CD8-positive, alpha-beta T cell (primary cell): ENCODE measurements at regions of chr16 and their contacts with region 1.

Region 1: GRCh38 chr16:11396241-11397048 is 51.2 kb downstream of the RMI2 start:
- DNase-seq: peak; percentile 46 to 78 (median 65)
- ATAC-seq: peak; percentile 85
- H3K4me3 ChIP-seq: no peak overlapping the region
- H3K4me3 Mint-ChIP-seq: no peak overlapping the region
- H3K27ac ChIP-seq: no peak overlapping the region
- H3K27ac Mint-ChIP-seq: no peak overlapping the region
- H3K4me1 ChIP-seq: no peaks in the 10 kb centered on the region
- H3K4me1 Mint-ChIP-seq: no peaks in the 10 kb centered on the region
- H3K27me3 ChIP-seq: no peaks in the 10 kb centered on the region
- H3K27me3 Mint-ChIP-seq: no peaks in the 10 kb centered on the region
- CTCF ChIP-seq: peak; percentile 99

Region 2: DNA sequence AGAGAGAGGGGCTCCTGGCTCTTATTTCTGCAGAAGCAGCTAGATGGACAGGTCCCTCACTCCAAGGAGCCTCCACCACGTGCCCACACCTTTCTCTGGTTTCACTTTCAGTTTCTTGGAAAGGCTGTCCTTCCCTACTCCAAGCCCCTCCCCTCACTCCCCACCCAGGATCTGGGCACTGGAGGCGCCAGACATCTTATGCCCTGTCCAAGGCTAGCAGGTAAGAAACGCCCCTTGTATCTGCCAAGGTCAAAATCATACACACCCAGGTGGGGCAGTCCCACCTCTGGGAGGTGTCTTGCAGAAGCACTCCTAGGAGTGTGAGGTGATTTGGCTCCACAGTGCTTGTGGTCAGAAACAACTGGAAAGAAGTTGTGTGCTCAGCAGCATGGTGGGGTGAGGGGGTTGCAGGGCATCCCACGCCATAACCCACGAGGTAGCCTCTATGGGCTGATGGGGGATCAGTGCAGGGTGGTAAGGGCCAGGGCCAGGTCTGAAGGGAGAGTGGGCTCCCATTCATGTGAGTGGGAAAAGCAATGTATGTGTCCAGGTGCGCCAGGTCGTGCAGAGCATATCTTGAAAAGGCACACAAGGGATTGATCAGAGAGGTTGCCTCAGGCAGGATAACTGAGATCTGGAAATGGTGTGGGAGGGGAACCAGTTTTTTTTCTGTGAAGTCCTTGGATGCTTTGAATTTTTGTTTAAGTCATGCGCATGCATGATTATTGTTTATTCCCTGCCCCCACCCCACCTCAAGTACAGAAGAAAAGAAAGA is 83.5 kb before region 1 on chr16:
- CTCF ChIA-PET with region 1: no interaction called
- POLR2A ChIA-PET with region 1: no interaction called
- intact Hi-C with region 1: no loop called
- DNase-seq: peak in 3 of 9 experiments; percentile 28 to 58 (median 33)
- ATAC-seq: peak; percentile 16
- H3K4me3 ChIP-seq: no peak overlapping the region
- H3K4me3 Mint-ChIP-seq: peak overlapping the region; percentile 20
- H3K27ac ChIP-seq: no peak overlapping the region
- H3K27ac Mint-ChIP-seq: peak overlapping the region; percentile 41
- H3K4me1 ChIP-seq: peaks cover 48% of the 10 kb centered on the region
- H3K4me1 Mint-ChIP-seq: peaks cover 48% of the 10 kb centered on the region
- H3K27me3 ChIP-seq: no peaks in the 10 kb centered on the region
- H3K27me3 Mint-ChIP-seq: no peaks in the 10 kb centered on the region
- CTCF ChIP-seq: no peak

Region 3: GRCh38 chr16:11328172-11329070 is 68.0 kb before region 1 on chr16:
- CTCF ChIA-PET with region 1: no interaction called
- POLR2A ChIA-PET with region 1: no interaction called
- intact Hi-C with region 1: no loop called
- DNase-seq: peak; percentile 12 to 71 (median 54)
- ATAC-seq: peak; percentile 83
- H3K4me3 ChIP-seq: no peak overlapping the region
- H3K4me3 Mint-ChIP-seq: peak overlapping the region; percentile 63
- H3K27ac ChIP-seq: no peak overlapping the region
- H3K27ac Mint-ChIP-seq: peak overlapping the region; percentile 66
- H3K4me1 ChIP-seq: peaks cover 17% of the 10 kb centered on the region
- H3K4me1 Mint-ChIP-seq: peaks cover 26% of the 10 kb centered on the region
- H3K27me3 ChIP-seq: no peaks in the 10 kb centered on the region
- H3K27me3 Mint-ChIP-seq: no peaks in the 10 kb centered on the region
- CTCF ChIP-seq: no peak

Region 4: DNA sequence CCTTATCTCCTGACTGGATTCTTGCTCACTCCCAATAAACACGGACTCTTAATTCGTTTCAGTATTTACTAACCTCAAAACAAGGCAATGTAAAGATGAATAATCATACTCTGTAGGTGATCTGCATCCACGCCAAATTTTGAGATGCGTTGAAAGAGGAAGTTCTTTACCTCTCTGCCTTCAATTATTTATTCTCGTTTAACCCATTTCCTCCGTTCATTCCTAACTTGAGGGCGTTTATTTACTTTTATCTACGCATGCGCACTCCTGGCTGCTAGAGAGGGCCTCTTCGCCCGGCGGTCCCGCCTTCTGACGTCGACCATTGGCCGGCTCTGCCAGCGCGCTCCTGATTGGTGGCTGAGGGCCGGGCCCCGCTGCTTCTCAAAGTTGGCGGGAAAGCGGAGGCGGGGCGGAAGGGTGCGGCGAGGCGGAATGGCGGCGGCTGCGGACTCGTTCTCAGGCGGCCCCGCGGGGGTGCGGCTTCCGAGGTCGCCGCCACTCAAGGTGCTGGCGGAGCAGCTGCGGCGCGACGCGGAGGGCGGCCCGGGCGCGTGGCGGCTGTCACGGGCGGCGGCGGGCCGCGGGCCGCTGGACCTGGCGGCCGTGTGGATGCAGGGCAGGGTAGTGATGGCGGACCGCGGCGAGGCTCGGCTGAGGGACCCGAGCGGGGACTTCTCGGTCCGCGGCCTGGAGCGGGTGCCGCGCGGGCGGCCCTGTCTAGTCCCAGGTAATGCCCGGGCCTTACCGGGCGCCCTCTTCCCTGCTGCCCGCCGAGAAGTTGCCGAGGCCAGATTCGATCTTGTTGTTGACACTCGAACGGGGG is 51.2 kb before region 1 on chr16 and contains the start of gene RMI2:
- CTCF ChIA-PET with region 1: no interaction called
- POLR2A ChIA-PET with region 1: no interaction called
- intact Hi-C with region 1: no loop called
- DNase-seq: peak; percentile 90 to 97 (median 95)
- ATAC-seq: peak; percentile 100
- H3K4me3 ChIP-seq: peak within 1 kb of the TSS; percentile 54 to 60
- H3K4me3 Mint-ChIP-seq: peak within 1 kb of the TSS; percentile 84
- H3K27ac ChIP-seq: no peak within 1 kb of the TSS
- H3K27ac Mint-ChIP-seq: peak within 1 kb of the TSS; percentile 83
- H3K4me1 ChIP-seq: no peaks in the 10 kb centered on the region
- H3K4me1 Mint-ChIP-seq: peaks cover 8% of the 10 kb centered on the region
- H3K27me3 ChIP-seq: no peaks in the 10 kb centered on the region
- H3K27me3 Mint-ChIP-seq: no peaks in the 10 kb centered on the region
- CTCF ChIP-seq: no peak
- total RNA-seq, gene RMI2: 0.69 to 0.73 TPM

Region 5: DNA sequence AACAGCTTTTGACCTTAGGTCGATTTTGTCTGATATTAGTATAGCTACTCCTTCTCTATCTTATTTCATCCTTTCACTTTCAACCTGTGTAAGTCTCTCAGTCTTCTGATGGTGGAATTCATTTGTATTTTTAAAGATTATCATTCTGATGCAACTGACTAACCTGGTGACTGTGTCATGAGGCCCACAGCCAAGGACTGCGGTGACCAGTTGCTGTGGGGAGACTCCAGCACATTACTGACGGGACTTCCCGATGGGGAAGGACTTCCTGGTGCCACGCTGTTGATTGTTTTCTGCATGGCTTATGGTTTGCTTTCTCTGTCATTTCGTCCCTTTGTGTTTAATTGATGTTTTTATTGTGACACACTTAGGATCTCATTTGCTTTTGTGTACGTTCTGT is 17.0 kb before region 1 on chr16:
- CTCF ChIA-PET with region 1: interaction called, 11 read pairs
- POLR2A ChIA-PET with region 1: no interaction called
- intact Hi-C with region 1: no loop called
- DNase-seq: peak in 3 of 9 experiments; percentile 43 to 65 (median 51)
- ATAC-seq: peak; percentile 78
- H3K4me3 ChIP-seq: no peak overlapping the region
- H3K4me3 Mint-ChIP-seq: peak overlapping the region; percentile 65
- H3K27ac ChIP-seq: no peak overlapping the region
- H3K27ac Mint-ChIP-seq: no peak overlapping the region
- H3K4me1 ChIP-seq: no peaks in the 10 kb centered on the region
- H3K4me1 Mint-ChIP-seq: peaks cover 7% of the 10 kb centered on the region
- H3K27me3 ChIP-seq: no peaks in the 10 kb centered on the region
- H3K27me3 Mint-ChIP-seq: no peaks in the 10 kb centered on the region
- CTCF ChIP-seq: no peak